ENCODE measurements at regions of chr5 and their contacts with region 1.

Region 1: GRCh38 chr5:111757355-111758283 is 625 bp upstream of the NREP start:
- DNase-seq: peak; percentile 91
- H3K4me3 ChIP-seq: peak overlapping the region; percentile 53 to 100 (median 80)
- H3K27ac ChIP-seq: peak overlapping the region; percentile 97
- H3K4me1 ChIP-seq: peaks cover 29% of the 10 kb centered on the region
- H3K27me3 ChIP-seq: no peaks in the 10 kb centered on the region
- CTCF ChIP-seq: peak; percentile 24 to 54
- POLR2A ChIP-seq: no peak

Region 2: DNA sequence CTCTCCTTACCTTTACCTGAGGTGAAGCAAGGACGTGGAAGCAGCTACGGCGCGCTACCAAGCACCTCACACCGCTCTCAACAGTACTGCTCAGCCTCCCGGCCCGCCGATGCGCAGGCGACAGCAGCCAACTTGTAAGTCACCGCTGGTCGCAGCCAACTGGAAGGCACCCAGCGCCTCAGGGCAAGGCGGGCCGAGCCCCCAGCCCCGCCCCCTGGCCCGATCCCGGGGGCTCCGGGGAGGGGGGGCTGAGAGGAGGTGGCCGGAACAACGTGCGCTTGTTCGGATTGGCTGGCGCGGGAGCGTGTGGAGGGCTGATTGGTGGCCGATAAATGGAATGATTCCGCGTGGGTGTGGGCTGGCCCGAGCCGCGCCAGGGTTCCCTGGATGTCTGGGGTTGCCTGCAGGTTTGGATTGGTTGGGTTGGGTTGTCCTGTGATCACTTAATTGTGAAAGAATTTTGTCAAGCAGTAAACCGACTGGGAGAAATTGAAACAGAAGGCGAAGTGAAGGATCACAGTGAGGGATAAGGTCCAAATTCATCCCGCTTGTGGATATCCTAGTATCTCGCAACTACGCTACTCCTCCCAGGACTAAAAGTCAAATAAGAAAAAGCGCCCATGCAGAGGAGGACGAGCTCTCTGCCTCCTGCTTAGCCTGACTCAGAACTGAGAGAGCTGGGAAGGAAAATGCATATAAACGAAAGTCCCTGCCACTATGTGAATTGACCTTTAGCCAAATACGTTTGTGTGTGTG is 245.1 kb before region 1 on chr5 and contains the start of gene STARD4:
- CTCF ChIA-PET with region 1: interaction called, 3 read pairs
- POLR2A ChIA-PET with region 1: interaction called, 5 read pairs
- dilution Hi-C with region 1: no loop called
- intact Hi-C with region 1: loop called (anchors 1 kb)
- DNase-seq: peak; percentile 97
- H3K4me3 ChIP-seq: peak within 1 kb of the TSS; percentile 72 to 97 (median 81)
- H3K27ac ChIP-seq: peak within 1 kb of the TSS; percentile 95
- H3K4me1 ChIP-seq: peaks cover 30% of the 10 kb centered on the region
- H3K27me3 ChIP-seq: no peaks in the 10 kb centered on the region
- CTCF ChIP-seq: no peak
- POLR2A ChIP-seq: peak; percentile 61
- total RNA-seq, gene STARD4: 77.1 and 87.8 TPM in 2 replicates

Region 3: GRCh38 chr5:111680737-111681413 is 76.7 kb before region 1 on chr5:
- CTCF ChIA-PET with region 1: no interaction called
- POLR2A ChIA-PET with region 1: no interaction called
- dilution Hi-C with region 1: no loop called
- intact Hi-C with region 1: loop called (anchors 1 kb)
- DNase-seq: peak; percentile 99
- H3K4me3 ChIP-seq: peak overlapping the region in 1 of 3 experiments; percentile 13
- H3K27ac ChIP-seq: peak overlapping the region; percentile 94
- H3K4me1 ChIP-seq: peaks cover 27% of the 10 kb centered on the region
- H3K27me3 ChIP-seq: no peaks in the 10 kb centered on the region
- CTCF ChIP-seq: no peak
- POLR2A ChIP-seq: no peak

Region 4: GRCh38 chr5:112136773-112137172 is 379.2 kb after region 1 on chr5:
- CTCF ChIA-PET with region 1: no interaction called
- POLR2A ChIA-PET with region 1: no interaction called
- dilution Hi-C with region 1: no loop called
- intact Hi-C with region 1: no loop called
- DNase-seq: no peak
- H3K4me3 ChIP-seq: no peak overlapping the region
- H3K27ac ChIP-seq: no peak overlapping the region
- H3K4me1 ChIP-seq: no peaks in the 10 kb centered on the region
- H3K27me3 ChIP-seq: no peaks in the 10 kb centered on the region
- CTCF ChIP-seq: no peak
- POLR2A ChIP-seq: no peak

Region 5: GRCh38 chr5:112160652-112161391 is 403.2 kb after region 1 on chr5:
- CTCF ChIA-PET with region 1: interaction called, 4 read pairs
- POLR2A ChIA-PET with region 1: interaction called, 4 read pairs
- dilution Hi-C with region 1: no loop called
- intact Hi-C with region 1: loop called (anchors 5 kb)
- DNase-seq: peak; percentile 92
- H3K4me3 ChIP-seq: peak overlapping the region; percentile 90 to 100 (median 92)
- H3K27ac ChIP-seq: peak overlapping the region; percentile 72
- H3K4me1 ChIP-seq: peaks cover 17% of the 10 kb centered on the region
- H3K27me3 ChIP-seq: peaks cover 0 to 4% of the 10 kb centered on the region in 2 experiments
- CTCF ChIP-seq: peak; percentile 99
- POLR2A ChIP-seq: peak; percentile 98

Measured in endothelial cell of umbilical vein (primary cell).